ENCODE measurements at regions of chr17 and their contacts with region 1.

Region 1: GRCh38 chr17:57861000-57861789 is 11.4 kb upstream of the MRPS23 start:
- DNase-seq: peak; percentile 76 to 79
- H3K4me3 ChIP-seq: peak overlapping the region; percentile 38
- H3K4me3 Mint-ChIP-seq: peak overlapping the region; percentile 95
- H3K27ac Mint-ChIP-seq: peak overlapping the region; percentile 84
- H3K4me1 ChIP-seq: peaks cover 20% of the 10 kb centered on the region
- H3K4me1 Mint-ChIP-seq: peaks cover 29% of the 10 kb centered on the region
- H3K27me3 ChIP-seq: no peaks in the 10 kb centered on the region
- H3K27me3 Mint-ChIP-seq: no peaks in the 10 kb centered on the region
- CTCF ChIP-seq: no peak

Region 2: DNA sequence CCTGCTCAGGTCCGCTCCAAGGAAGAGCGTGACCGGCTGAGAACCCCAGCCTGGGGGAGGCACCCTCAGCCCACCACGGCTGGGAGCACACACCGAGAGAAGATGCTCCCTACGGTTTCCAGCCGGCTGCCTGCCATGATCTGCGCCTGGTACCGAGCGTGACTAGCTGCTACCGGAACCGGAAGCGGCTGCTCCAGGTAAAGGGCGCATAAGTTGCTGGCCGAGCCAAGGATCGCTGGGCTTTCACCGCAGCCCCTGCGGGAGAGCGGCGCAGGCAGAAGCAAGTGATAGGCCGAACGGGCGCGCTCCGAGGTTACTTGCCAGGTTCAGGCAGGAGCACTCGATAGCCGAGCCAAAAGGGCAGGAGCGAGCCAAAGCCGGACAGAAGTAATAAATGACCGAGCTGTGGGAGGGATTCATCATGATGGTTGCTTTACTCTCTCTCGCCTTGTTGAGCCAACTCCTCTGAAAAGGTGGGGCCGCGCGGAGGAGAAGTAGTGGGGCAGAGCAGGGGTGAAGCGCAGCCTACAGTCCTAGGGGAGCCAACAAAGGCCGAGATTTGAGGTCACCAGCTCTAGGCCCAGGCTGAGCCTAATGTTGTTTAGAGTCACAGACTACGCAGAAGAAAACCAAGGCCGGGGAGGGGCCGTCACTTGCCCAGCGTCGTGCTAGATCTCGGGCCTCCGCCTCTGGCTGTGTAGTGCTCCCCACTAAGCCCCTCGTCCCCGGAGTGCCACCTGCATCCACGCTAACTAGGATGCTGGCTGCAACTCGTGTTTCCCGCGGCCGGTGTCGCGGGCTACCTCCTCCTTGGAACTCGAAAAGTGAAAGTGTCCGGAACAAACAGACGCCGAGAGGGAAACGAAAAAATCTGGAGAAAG is 11.1 kb before region 1 on chr17 and contains the start of gene MRPS23:
- CTCF ChIA-PET with region 1: interaction called, 10 read pairs
- POLR2A ChIA-PET with region 1: interaction called, 11 read pairs
- intact Hi-C with region 1: no loop called
- DNase-seq: peak; percentile 98 to 99
- H3K4me3 ChIP-seq: peak within 1 kb of the TSS; percentile 84
- H3K4me3 Mint-ChIP-seq: peak within 1 kb of the TSS; percentile 92
- H3K27ac Mint-ChIP-seq: peak within 1 kb of the TSS; percentile 94
- H3K4me1 ChIP-seq: peaks cover 20% of the 10 kb centered on the region
- H3K4me1 Mint-ChIP-seq: peaks cover 31% of the 10 kb centered on the region
- H3K27me3 ChIP-seq: no peaks in the 10 kb centered on the region
- H3K27me3 Mint-ChIP-seq: no peaks in the 10 kb centered on the region
- CTCF ChIP-seq: no peak
- total RNA-seq, gene MRPS23: 72.9 and 75.1 TPM in 2 replicates

Region 3: GRCh38 chr17:57875309-57876115 is 14.3 kb after region 1 on chr17:
- CTCF ChIA-PET with region 1: interaction called, 13 read pairs
- POLR2A ChIA-PET with region 1: interaction called, 6 read pairs
- intact Hi-C with region 1: loop called (anchors 2 kb)
- DNase-seq: peak; percentile 72 to 76
- H3K4me3 ChIP-seq: no peak overlapping the region
- H3K4me3 Mint-ChIP-seq: no peak overlapping the region
- H3K27ac Mint-ChIP-seq: peak overlapping the region; percentile 89
- H3K4me1 ChIP-seq: peaks cover 34% of the 10 kb centered on the region
- H3K4me1 Mint-ChIP-seq: peaks cover 36% of the 10 kb centered on the region
- H3K27me3 ChIP-seq: no peaks in the 10 kb centered on the region
- H3K27me3 Mint-ChIP-seq: no peaks in the 10 kb centered on the region
- CTCF ChIP-seq: peak; percentile 33 to 36

Region 4: DNA sequence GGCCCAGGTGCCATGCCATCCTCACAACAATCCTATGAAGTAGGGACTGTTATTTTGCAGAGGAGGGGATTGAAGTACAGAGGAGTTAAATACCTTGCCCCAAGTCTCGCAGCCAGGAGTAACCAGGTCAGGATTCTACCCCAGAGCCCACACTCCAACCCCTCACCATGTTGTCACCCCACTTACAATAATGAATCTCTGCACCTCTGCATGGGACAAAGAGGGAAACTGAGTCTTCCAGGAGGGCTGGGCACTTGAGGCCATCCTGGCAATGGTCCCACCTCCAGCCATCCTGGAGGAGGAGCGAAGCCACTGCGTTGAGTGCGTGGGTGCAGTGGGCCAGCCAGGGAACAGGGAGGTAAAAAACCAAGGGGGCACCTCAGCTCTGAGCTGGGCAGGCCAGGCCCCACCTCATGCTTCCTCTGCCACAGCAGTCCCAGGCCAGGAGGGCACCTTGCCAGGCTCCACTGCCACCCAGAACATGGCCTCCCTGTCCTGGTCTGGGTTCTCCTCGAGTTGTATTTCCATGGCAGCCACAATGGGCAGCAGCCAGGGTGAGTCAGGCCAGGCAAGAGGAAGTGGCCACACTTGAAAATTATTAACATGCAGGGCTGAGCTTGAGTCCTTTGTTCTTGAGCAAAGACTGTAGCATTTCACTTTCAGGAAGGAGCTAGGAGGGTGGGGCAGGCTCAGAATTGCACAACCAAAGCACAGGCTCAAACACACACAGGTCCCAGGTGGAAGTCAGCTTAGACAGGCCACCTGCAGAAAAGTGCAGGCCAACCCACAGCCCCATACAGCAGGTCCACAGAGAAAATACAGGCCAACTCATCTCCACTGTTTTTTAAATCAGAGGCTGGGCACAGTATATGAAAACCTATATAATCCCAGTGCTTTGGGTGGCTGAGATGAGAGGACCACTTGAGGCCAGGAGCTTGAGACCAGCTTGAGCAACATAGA is 41.9 kb after region 1 on chr17:
- CTCF ChIA-PET with region 1: interaction called, 12 read pairs
- POLR2A ChIA-PET with region 1: interaction called, 5 read pairs
- intact Hi-C with region 1: loop called (anchors 2 kb)
- DNase-seq: peak; percentile 89 to 92
- H3K4me3 ChIP-seq: no peak overlapping the region
- H3K4me3 Mint-ChIP-seq: peak overlapping the region; percentile 49
- H3K27ac Mint-ChIP-seq: peak overlapping the region; percentile 87
- H3K4me1 ChIP-seq: peaks cover 74% of the 10 kb centered on the region
- H3K4me1 Mint-ChIP-seq: peaks cover 52% of the 10 kb centered on the region
- H3K27me3 ChIP-seq: no peaks in the 10 kb centered on the region
- H3K27me3 Mint-ChIP-seq: no peaks in the 10 kb centered on the region
- CTCF ChIP-seq: no peak

Region 5: DNA sequence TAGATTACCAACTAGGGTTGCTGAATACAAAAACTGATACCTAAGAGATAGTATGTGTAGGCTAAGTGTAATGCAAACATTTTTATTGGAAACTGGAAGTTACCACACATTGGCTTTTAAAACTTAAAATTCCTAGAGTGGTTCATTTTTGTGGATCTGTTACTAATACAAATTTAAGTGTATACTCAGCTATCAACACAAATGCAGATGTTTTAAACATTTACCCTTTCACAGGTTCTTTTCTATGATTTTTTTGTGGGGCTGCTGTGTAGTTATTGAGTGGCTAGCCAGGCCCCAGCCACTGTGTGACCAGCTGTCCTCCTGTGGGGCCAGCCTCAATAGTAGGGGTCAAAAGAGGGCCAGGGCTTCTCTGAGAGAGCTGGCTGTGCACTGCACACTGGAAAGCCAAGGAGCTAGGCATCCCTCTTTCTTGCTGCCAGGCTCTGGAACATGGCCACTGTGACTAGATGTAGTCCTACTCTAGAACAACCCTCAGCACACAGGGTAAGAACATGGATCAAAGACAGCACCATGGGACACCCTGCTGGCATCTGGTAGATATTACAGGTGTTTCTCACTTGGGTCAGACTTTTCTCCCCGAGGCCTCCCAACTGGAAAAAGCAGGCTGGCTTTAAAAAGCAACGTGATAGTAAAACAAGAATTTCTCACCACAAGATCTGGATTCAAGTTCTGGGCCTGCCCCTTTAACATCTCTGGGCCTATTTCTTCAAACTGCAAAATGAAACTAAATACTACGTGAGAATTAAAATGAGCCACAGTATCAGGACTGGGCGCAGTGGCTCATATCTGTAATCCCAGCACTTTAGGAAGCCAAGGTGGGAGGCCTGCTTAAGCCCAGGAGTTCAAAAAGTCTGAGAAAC is 134.1 kb after region 1 on chr17:
- CTCF ChIA-PET with region 1: interaction called, 23 read pairs
- POLR2A ChIA-PET with region 1: interaction called, 3 read pairs
- intact Hi-C with region 1: loop called (anchors 1 kb)
- DNase-seq: peak; percentile 77 to 80
- H3K4me3 ChIP-seq: no peak overlapping the region
- H3K4me3 Mint-ChIP-seq: no peak overlapping the region
- H3K27ac Mint-ChIP-seq: peak overlapping the region; percentile 12
- H3K4me1 ChIP-seq: peaks cover 31% of the 10 kb centered on the region
- H3K4me1 Mint-ChIP-seq: peaks cover 28% of the 10 kb centered on the region
- H3K27me3 ChIP-seq: no peaks in the 10 kb centered on the region
- H3K27me3 Mint-ChIP-seq: no peaks in the 10 kb centered on the region
- CTCF ChIP-seq: peak; percentile 77 to 83

Region 6: DNA sequence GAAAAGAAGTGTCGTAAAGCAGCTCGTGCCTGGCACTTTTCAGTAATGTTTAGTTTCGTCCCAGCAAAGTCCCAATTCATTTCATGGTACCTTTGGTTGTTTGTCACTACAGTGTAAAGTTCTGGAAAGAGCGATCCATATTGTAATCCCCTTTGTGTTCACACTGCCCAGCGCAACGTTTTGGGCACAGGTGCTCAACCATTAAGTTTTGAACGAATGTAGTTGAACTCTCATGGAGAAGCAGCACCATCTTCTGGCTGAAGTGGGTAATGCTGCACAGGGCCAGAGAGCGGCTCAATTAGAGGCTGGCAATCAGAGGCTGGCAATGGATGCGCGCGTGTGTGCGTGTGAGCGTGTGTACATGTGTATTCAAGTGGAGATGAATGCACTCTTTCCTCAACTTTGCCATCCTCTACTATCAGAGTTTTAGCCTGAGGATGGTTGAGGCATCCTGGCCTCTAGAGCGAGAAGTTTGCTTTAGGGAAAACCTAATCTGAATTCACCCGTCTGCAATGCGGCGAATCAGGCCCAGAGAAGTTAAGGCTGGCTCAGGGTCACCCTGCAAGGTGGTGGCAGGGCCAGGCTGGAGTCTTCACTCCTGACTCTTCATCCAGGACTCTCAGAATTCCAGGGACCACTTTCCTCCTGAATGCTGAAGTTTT is 251.9 kb after region 1 on chr17:
- CTCF ChIA-PET with region 1: interaction called, 3 read pairs
- POLR2A ChIA-PET with region 1: interaction called, 3 read pairs
- intact Hi-C with region 1: loop called (anchors 1 kb)
- DNase-seq: peak; percentile 78 to 88
- H3K4me3 ChIP-seq: no peak overlapping the region
- H3K4me3 Mint-ChIP-seq: no peak overlapping the region
- H3K27ac Mint-ChIP-seq: no peak overlapping the region
- H3K4me1 ChIP-seq: no peaks in the 10 kb centered on the region
- H3K4me1 Mint-ChIP-seq: no peaks in the 10 kb centered on the region
- H3K27me3 ChIP-seq: no peaks in the 10 kb centered on the region
- H3K27me3 Mint-ChIP-seq: peaks cover 8% of the 10 kb centered on the region
- CTCF ChIP-seq: peak; percentile 92 to 97

Measured in Caco-2 (cell line).